ENCODE measurements at regions of chr11 and their contacts with region 1.

Region 1: GRCh38 chr11:62108017-62108750 is 15.6 kb upstream of the INCENP start:
- DNase-seq: peak in 2 of 7 donors; percentile 49 to 50
- H3K4me3 ChIP-seq: no peak overlapping the region
- H3K27ac ChIP-seq: no peak overlapping the region
- H3K4me1 ChIP-seq: peaks cover 11 to 21% of the 10 kb centered on the region in 2 donors
- H3K27me3 ChIP-seq: no peaks in the 10 kb centered on the region
- CTCF ChIP-seq: peak; percentile 83 to 92 (median 87)
- POLR2A ChIP-seq: no peak

Region 2: GRCh38 chr11:61747192-61747966 is 360.8 kb before region 1 on chr11:
- intact Hi-C with region 1: loop called in 1 of 2 experiments (anchors 5 kb)
- DNase-seq: peak; percentile 73 to 90 (median 82)
- H3K4me3 ChIP-seq: no peak overlapping the region
- H3K27ac ChIP-seq: no peak overlapping the region
- H3K4me1 ChIP-seq: peaks cover 3 to 4% of the 10 kb centered on the region in 2 donors
- H3K27me3 ChIP-seq: no peaks in the 10 kb centered on the region
- CTCF ChIP-seq: peak; percentile 75 to 92 (median 86)
- POLR2A ChIP-seq: no peak

Region 3: DNA sequence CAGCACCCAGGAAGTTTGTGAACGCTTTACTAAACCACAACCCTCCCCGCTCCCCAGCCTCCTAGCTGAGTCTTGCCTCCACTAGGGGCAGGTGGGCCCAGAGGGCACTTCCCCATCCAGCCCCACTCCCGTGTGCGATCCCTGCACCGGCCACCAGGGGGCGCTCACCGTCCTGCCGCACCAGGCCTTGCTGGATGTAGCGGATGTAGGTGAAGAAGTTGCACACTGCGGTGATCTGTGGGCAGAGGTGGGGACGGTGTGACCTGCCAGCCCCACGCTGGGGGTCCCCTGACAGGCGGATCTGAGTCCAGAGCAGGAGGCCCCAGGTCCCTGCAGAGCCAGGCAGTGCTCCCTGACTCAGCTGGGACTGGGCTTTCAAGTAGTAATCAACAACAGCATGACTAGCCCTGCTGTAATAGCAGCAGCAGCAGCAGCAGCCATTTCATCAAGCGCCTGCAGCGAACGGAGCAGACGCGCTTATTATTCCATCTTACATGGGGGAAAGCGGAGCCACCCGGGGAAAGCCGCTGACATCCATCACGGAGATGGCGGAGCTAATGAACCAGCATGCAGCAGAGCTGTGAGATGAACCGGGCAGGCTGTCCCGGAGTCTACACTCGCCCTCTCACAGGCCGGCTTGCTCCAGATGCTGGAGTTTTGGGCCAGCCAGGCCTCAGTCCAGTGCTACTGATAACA is 208.9 kb before region 1 on chr11:
- intact Hi-C with region 1: loop called (anchors 5 kb)
- DNase-seq: peak; percentile 77 to 91 (median 82)
- H3K4me3 ChIP-seq: no peak overlapping the region
- H3K27ac ChIP-seq: peak overlapping the region in 1 of 5 donors; percentile 47
- H3K4me1 ChIP-seq: no peaks in the 10 kb centered on the region
- H3K27me3 ChIP-seq: no peaks in the 10 kb centered on the region
- CTCF ChIP-seq: peak; percentile 98 to 100 (median 99)
- POLR2A ChIP-seq: no peak